ENCODE measurements at regions of chr9 and their contacts with region 1.

Region 1: DNA sequence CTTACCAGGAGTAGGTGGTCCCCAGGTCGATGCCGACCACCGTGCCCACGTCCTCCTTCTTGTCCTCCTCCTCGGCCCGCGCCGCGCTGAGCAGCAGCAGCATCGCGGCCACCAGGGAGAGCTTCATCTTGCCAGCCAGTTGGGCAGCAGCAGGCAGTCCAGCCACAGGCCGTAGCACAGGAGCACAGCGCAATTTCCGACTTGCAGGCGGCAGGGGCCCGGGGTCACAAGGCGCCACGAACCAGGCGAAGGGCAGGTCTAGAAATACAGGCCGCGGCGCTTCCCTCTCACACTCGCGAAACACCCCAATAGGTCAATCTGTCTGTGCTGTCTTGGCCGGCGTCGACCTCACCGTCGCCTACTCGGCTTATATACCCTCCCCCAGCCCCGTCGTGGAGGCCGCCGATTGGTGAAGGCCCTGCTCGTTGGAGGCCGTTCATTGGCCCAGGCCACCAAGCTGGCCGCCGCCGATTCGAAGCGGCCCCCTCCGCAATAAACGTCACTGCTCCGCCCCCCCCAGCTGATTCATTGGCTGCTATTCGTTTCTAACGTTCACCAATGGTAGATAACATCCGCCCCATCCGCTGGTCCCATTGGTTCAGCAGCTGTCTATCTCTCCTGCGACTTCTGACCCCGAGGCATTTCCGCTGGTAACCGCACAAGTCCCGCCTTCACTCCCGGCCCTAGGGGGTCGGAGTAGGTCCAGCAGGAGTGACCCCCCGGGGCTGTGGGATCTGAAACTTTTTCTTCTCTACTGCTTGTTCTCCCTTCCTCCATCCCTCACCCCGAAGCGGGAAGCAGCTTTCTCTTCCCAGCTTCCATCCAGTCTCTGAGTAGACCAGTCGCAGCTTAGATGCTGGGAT is at the start of gene HSPA5:
- DNase-seq: peak; percentile 96 to 100 (median 98)
- ATAC-seq: peak; percentile 88
- H3K4me3 ChIP-seq: peak within 1 kb of the TSS; percentile 92
- H3K27ac ChIP-seq: peak within 1 kb of the TSS; percentile 99
- H3K4me1 ChIP-seq: peaks cover 21 to 31% of the 10 kb centered on the region in 2 experiments; a peak in 4 of 5 replicates
- H3K27me3 ChIP-seq: no peaks in the 10 kb centered on the region; a peak in 1 of 5 replicates
- CTCF ChIP-seq: peak; percentile 15 to 32 (median 16); a peak in 3 of 6 replicates
- EP300 ChIP-seq: no peak
- POLR2A ChIP-seq: no peak
- RAD21 ChIP-seq: peak in 1 of 2 experiments; percentile 15; a peak in 2 of 4 replicates
- polyA plus RNA-seq, gene HSPA5: 48.0 to 113 TPM

Region 2: GRCh38 chr9:125200210-125201047 is 40.8 kb before region 1 on chr9 and contains the start of gene RABEPK:
- CTCF ChIA-PET with region 1: no interaction called
- POLR2A ChIA-PET with region 1: interaction called, 15 read pairs
- in situ Hi-C with region 1: no loop called
- intact Hi-C with region 1: loop called (anchors 2 kb)
- DNase-seq: peak; percentile 96 to 98 (median 97)
- ATAC-seq: peak; percentile 99
- H3K4me3 ChIP-seq: peak within 1 kb of the TSS; percentile 80
- H3K27ac ChIP-seq: peak within 1 kb of the TSS; percentile 88
- H3K4me1 ChIP-seq: peaks cover 3 to 13% of the 10 kb centered on the region in 2 experiments; a peak in 2 of 5 replicates
- H3K27me3 ChIP-seq: no peaks in the 10 kb centered on the region
- CTCF ChIP-seq: no peak
- EP300 ChIP-seq: no peak
- POLR2A ChIP-seq: peak; percentile 95
- RAD21 ChIP-seq: no peak
- polyA plus RNA-seq, gene RABEPK: 81.5 to 113 TPM

Region 3: GRCh38 chr9:125261501-125262293 is 20.5 kb after region 1 on chr9 and contains the start of gene GAPVD1:
- CTCF ChIA-PET with region 1: no interaction called
- POLR2A ChIA-PET with region 1: interaction called, 40 read pairs
- in situ Hi-C with region 1: no loop called
- intact Hi-C with region 1: no loop called
- DNase-seq: peak; percentile 97 to 99 (median 98)
- ATAC-seq: peak; percentile 96
- H3K4me3 ChIP-seq: peak within 1 kb of the TSS; percentile 97
- H3K27ac ChIP-seq: peak within 1 kb of the TSS; percentile 99
- H3K4me1 ChIP-seq: peaks cover 18 to 22% of the 10 kb centered on the region in 2 experiments; a peak in 4 of 5 replicates
- H3K27me3 ChIP-seq: no peaks in the 10 kb centered on the region
- CTCF ChIP-seq: peak; percentile 62 to 73 (median 62); a peak in 5 of 6 replicates
- EP300 ChIP-seq: 0 out of 2 replicates have a peak, but pooled peaks have one; percentile 16
- POLR2A ChIP-seq: peak; percentile 90
- RAD21 ChIP-seq: no peak
- polyA plus RNA-seq, gene GAPVD1: 9.5 to 12.0 TPM

Region 4: DNA sequence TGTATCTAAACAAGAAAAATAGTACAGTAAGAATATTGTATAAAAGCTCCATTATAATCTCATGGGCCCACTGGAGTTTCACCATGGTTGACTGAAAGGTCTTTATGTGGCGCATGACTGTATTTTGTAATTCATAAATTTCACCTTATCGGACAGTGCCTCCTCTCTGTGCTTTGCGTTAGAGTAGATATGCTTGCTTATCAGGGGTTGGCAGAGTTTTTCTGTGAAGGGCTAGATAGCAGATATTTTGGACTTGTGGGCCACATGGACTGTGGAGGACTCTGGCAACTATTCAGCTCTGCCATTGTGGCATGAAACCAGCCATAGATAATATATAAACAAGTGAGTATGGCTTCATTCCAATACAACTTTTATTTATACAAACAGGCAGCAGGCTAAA is 43.6 kb after region 1 on chr9:
- CTCF ChIA-PET with region 1: no interaction called
- POLR2A ChIA-PET with region 1: interaction called, 24 read pairs
- in situ Hi-C with region 1: no loop called
- intact Hi-C with region 1: loop called (anchors 1 kb)
- DNase-seq: peak; percentile 75 to 95 (median 80)
- ATAC-seq: peak; percentile 86
- H3K4me3 ChIP-seq: no peak overlapping the region
- H3K27ac ChIP-seq: peak overlapping the region; percentile 81
- H3K4me1 ChIP-seq: peaks cover 25 to 41% of the 10 kb centered on the region in 2 experiments
- H3K27me3 ChIP-seq: no peaks in the 10 kb centered on the region
- CTCF ChIP-seq: no peak
- EP300 ChIP-seq: peak; percentile 100
- POLR2A ChIP-seq: no peak
- RAD21 ChIP-seq: peak in 1 of 2 experiments; percentile 23; a peak in 1 of 4 replicates

Region 5: GRCh38 chr9:125374443-125375309 is 133.4 kb after region 1 on chr9:
- CTCF ChIA-PET with region 1: no interaction called
- POLR2A ChIA-PET with region 1: interaction called, 14 read pairs
- in situ Hi-C with region 1: no loop called
- intact Hi-C with region 1: no loop called
- DNase-seq: peak; percentile 79 to 82 (median 81)
- ATAC-seq: peak; percentile 95
- H3K4me3 ChIP-seq: peak overlapping the region; percentile 12; the same call in 1 of the 2 replicates
- H3K27ac ChIP-seq: no peak overlapping the region
- H3K4me1 ChIP-seq: peaks cover 8 to 19% of the 10 kb centered on the region in 2 experiments; a peak in 4 of 5 replicates
- H3K27me3 ChIP-seq: no peaks in the 10 kb centered on the region
- CTCF ChIP-seq: peak; percentile 81 to 89 (median 88)
- EP300 ChIP-seq: no peak
- POLR2A ChIP-seq: no peak
- RAD21 ChIP-seq: peak; percentile 91 to 93

Measured in K562 (cell line).